PC-9 (cell line): ENCODE measurements at regions of chr13 and their contacts with region 1.

Region 1: DNA sequence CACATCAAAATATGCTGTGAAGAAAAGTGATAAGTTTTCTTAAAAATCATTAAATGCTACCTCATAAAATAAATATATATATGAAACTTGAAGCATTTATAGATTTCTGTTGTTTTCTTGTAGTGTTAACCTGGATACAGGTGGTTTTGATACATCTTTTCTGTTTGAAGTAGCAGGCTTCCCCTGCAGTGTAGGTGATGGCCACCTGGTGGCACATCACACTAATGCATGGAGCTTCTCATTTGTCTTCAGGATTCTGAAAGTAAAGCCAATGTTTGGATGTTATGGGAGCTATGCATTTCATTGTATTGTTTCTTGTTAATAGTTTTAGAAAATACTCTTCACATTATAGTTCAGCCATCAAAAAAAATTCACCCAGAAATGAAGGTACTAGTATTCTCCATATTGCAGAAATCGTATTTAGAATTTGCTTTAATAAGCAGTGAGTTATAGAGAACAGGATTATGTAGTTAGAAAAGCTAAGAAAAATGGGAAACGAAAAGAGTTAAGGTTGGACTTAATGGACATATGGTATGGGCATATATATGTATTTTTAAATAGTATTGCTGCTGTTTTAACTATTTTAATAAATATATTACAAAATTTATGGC is 18.7 kb downstream of the GPR180 start:
- DNase-seq: peak in 1 of 2 experiments; percentile 25
- H3K4me3 ChIP-seq: no peak overlapping the region
- H3K27ac ChIP-seq: no peak overlapping the region
- H3K4me1 ChIP-seq: no peaks in the 10 kb centered on the region
- H3K27me3 ChIP-seq: no peaks in the 10 kb centered on the region
- CTCF ChIP-seq: peak; percentile 93

Region 2: GRCh38 chr13:94435604-94436226 is 184.7 kb before region 1 on chr13:
- CTCF ChIA-PET with region 1: interaction called, 14 read pairs
- POLR2A ChIA-PET with region 1: no interaction called
- intact Hi-C with region 1: loop called (anchors 1 kb)
- DNase-seq: no peak
- H3K4me3 ChIP-seq: no peak overlapping the region
- H3K27ac ChIP-seq: no peak overlapping the region
- H3K4me1 ChIP-seq: no peaks in the 10 kb centered on the region
- H3K27me3 ChIP-seq: no peaks in the 10 kb centered on the region
- CTCF ChIP-seq: peak; percentile 77

Region 3: GRCh38 chr13:95156208-95156607 is 535.8 kb after region 1 on chr13:
- CTCF ChIA-PET with region 1: no interaction called
- POLR2A ChIA-PET with region 1: no interaction called
- intact Hi-C with region 1: loop called (anchors 5 kb)
- DNase-seq: no peak
- H3K4me3 ChIP-seq: no peak overlapping the region
- H3K27ac ChIP-seq: no peak overlapping the region
- H3K4me1 ChIP-seq: no peaks in the 10 kb centered on the region
- H3K27me3 ChIP-seq: no peaks in the 10 kb centered on the region
- CTCF ChIP-seq: peak; percentile 62